AG04450 (cell line): ENCODE measurements at regions of chr15 and their contacts with region 1.

Region 1: DNA sequence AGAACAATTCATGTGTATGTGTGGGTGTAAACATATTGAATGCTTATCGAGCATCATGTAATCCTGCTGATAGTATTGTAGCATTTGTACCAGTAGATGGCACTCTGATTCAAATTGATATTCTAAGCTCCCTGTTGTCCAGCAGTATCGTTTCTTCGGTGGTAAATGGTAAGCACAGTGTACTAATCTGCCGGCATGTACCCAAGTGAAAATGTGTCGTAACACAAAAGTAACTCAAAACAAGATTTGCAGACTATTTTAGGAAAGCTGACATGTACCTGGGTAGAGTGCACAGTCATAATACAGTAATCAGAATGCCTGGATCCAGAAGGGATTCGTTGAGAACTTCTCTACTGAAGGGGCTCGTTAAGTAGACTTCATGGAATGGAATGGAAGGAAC is 31.7 kb upstream of the MNS1 start:
- DNase-seq: peak; percentile 55
- H3K4me3 ChIP-seq: no peak overlapping the region
- H3K27ac ChIP-seq: no peak overlapping the region
- H3K27me3 ChIP-seq: peaks cover 9% of the 10 kb centered on the region
- CTCF ChIP-seq: peak; percentile 72

Region 2: GRCh38 chr15:56869573-56869972 is 372.9 kb after region 1 on chr15:
- CTCF ChIA-PET with region 1: interaction called, 15 read pairs
- POLR2A ChIA-PET with region 1: no interaction called
- DNase-seq: no peak
- H3K4me3 ChIP-seq: no peak overlapping the region
- H3K27ac ChIP-seq: no peak overlapping the region
- H3K27me3 ChIP-seq: no peaks in the 10 kb centered on the region
- CTCF ChIP-seq: peak; percentile 43